Left colon (tissue), 2 donors: ENCODE measurements at regions of chr12 and their contacts with region 1.

Region 1: DNA sequence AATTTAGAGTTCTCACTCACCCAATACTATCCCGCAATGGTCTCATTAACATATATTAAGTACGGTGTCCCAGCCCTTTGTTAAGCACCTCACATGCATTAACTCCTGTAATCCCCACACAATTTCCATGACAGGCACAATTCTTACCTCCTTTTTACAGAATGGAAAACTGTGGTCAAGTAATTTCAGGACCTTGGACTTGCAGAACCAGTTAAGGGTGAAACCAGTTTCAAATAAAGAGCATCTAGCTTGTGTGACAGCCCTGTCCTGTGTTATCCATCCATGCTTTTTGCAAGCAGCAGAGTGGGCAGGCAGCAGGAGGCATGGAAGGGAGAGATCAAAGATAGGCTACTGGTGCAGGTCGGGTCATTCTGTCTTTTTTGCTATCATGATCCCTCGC is 470.8 kb downstream of the NELL2 start:
- DNase-seq: no peak
- ATAC-seq: no peak

Region 2: DNA sequence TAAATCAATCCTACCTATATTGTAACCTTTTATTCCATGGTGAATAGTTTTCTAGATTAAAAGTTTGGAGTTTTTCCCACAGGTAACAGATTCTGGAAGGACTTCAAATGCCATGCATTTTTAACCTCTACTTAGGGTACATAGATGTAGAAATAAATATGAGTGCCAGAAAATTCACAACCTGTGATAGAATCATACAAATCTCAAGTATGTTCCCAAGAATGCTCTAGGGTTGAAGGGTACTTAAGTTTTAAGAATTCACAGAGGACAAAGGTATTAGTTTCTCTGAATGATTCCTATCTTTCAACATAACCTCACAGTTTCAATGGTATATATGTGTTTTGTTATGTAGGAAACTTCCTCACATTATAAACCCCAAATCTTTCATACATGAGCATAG is 58.2 kb before region 1 on chr12:
- intact Hi-C with region 1: loop called in 1 of 2 experiments (anchors 2 kb)
- DNase-seq: no peak
- ATAC-seq: no peak